ENCODE measurements at regions of chr1 and their contacts with region 1.

Region 1: DNA sequence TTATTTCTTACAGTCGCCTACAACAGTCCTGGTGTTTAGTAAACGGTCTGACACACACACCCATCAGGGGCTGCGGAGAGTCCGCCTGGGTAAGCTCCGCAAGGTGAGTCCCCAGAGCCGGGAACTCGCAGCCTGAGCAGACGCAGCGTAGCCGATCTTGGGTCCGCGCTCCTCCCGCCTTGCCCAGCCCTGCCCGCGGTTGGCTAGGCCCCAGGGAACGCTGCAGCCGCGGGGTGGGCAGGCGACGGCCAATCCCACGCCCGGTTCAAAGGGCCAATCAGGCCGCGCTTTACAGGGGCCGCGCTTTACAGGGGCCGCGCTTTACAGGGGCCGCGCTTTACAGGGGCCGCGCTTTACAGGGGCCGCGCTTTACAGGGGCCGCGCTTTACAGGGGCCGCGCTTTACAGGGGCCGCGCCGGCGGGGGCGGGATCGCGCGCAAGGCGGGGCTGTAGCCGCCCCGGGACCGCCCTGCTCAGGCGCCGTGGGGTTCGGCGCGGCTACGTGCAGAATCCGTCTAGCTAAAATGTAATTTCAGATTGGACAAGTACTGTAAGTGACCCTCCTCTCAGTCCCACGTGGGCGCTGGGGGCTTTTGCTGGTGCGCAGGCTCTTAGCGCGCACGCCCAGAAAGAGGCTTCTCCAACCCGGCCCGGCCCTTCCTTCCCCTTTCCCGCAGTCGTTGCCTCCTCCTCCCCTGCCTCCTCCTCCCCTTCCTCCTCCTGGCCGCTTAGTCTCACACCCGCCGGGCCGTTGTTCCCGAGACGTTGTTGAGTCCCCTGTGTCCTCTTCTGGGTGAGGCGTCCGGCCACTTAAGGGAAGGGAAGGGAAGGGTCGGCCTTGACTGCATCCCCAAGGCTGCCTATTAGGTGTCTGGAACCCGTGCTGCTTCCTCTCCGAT is at the start of gene FGGY:
- H3K4me3 Mint-ChIP-seq: peak within 1 kb of the TSS; percentile 78
- H3K27ac Mint-ChIP-seq: peak within 1 kb of the TSS; percentile 94
- H3K4me1 Mint-ChIP-seq: peaks cover 47% of the 10 kb centered on the region
- H3K27me3 Mint-ChIP-seq: no peaks in the 10 kb centered on the region

Region 2: DNA sequence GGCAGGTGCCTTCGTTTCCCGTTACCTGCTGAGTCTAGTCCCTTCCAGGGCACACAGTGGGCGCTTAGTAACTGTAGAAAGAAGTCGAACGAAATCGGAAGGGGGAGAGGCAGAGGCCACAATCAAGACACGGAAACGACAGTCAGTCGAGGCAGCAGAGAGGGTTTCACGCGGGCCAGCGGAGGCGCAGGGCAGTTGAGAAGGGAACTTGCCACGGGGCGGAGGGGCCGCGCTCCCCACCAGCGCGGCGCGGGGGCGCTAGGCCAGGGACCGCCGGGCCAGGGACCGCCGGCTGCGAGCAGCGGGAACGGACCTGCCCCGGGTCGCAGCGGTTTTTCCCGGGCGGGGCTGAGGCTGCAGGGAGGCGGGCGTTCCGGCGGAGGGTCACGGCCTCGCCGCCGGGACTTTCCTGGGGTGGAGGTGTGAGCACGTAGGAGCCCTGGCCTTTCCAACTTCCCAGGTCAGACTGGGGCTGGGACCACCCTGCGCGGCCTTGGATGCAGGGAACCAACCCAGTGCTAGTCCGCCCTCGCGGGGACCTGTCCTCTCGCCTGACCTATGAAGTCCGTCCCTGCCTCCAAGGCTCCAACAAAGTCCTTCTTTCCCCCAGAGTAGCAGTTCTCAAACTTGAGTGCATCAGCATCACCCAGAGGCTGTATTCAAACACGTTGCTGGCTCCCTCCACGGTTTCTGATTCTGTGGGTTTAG is 149.8 kb before region 1 on chr1:
- intact Hi-C with region 1: loop called (anchors 10 kb)
- H3K4me3 Mint-ChIP-seq: peak overlapping the region; percentile 87
- H3K27ac Mint-ChIP-seq: peak overlapping the region; percentile 72
- H3K4me1 Mint-ChIP-seq: peaks cover 39% of the 10 kb centered on the region
- H3K27me3 Mint-ChIP-seq: peaks cover 17% of the 10 kb centered on the region